Activated CD4-positive, alpha-beta T cell treated with anti-CD3 and anti-CD28 coated beads for 36 hours (primary cell): ENCODE measurements at regions of chr17 and their contacts with region 1.

Region 1: GRCh38 chr17:55601874-55602364 is 90.7 kb upstream of the SMIM36 start:
- DNase-seq: peak; percentile 37
- ATAC-seq: peak; percentile 58
- H3K4me3 Mint-ChIP-seq: no peak overlapping the region
- H3K27ac Mint-ChIP-seq: no peak overlapping the region
- H3K4me1 Mint-ChIP-seq: no peaks in the 10 kb centered on the region
- H3K27me3 Mint-ChIP-seq: peaks cover 16% of the 10 kb centered on the region

Region 2: GRCh38 chr17:55198690-55199370 is 403.1 kb before region 1 on chr17:
- CTCF ChIA-PET with region 1: no interaction called
- POLR2A ChIA-PET with region 1: no interaction called
- intact Hi-C with region 1: no loop called
- DNase-seq: no peak
- ATAC-seq: no peak
- H3K4me3 Mint-ChIP-seq: no peak overlapping the region
- H3K27ac Mint-ChIP-seq: no peak overlapping the region
- H3K4me1 Mint-ChIP-seq: no peaks in the 10 kb centered on the region
- H3K27me3 Mint-ChIP-seq: peaks cover 4% of the 10 kb centered on the region

Region 3: DNA sequence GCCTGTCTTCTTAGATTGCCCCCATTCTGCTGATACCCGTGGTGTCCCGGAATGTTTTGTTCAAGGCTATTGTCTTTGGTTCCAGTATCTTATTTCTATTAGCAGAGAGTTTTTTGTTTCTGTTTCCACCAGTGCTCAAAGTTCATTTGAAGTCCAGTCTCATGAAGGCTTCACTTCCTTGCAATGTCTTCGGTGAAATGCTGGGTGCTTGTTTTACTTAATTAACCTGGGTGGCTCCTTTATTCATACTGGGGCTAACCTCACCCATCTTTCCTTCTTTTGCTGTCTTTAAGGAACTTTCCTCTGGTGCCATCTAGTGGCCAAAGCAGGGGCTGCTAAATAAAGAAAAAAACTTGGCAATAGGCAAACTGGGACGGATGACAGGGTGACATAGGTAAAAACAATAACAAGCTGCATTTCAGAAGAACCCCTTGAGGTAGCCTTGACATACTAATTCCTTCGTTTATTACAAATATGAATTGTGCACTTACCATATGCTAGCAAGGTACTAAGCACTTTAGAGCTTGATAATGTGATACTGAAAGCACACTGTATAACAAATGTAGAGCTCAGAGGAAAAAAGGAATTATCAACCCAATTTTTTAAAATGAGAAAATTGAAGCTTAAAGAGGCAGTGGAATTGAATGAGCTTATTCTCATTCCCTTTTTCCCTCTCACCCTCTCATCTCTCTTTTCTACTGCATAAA is 87.9 kb before region 1 on chr17:
- CTCF ChIA-PET with region 1: interaction called, 11 read pairs
- POLR2A ChIA-PET with region 1: no interaction called
- intact Hi-C with region 1: no loop called
- DNase-seq: peak; percentile 77
- ATAC-seq: peak; percentile 66
- H3K4me3 Mint-ChIP-seq: no peak overlapping the region
- H3K27ac Mint-ChIP-seq: no peak overlapping the region
- H3K4me1 Mint-ChIP-seq: no peaks in the 10 kb centered on the region
- H3K27me3 Mint-ChIP-seq: peaks cover 2% of the 10 kb centered on the region

Region 4: DNA sequence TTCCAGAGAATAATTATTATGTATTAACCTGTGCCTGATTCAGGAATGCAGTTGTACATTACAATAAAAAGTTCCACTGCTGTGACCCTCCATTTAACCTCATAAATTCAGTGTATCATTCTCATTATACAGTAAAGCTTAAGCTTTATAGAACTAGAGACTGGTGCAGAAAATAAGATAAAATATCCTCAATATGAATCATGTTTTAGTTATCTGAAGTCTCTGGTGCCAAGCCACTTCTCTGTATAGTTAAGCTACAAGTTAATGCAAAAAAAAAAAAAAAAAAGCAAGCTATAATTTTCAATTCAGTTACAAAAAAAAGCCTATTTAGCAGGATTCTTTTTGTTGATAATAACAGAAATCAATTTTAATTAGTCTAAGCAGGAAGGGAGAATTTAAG is 68.3 kb before region 1 on chr17:
- CTCF ChIA-PET with region 1: interaction called, 158 read pairs
- POLR2A ChIA-PET with region 1: no interaction called
- intact Hi-C with region 1: no loop called
- DNase-seq: no peak
- ATAC-seq: no peak
- H3K4me3 Mint-ChIP-seq: no peak overlapping the region
- H3K27ac Mint-ChIP-seq: no peak overlapping the region
- H3K4me1 Mint-ChIP-seq: no peaks in the 10 kb centered on the region
- H3K27me3 Mint-ChIP-seq: peaks cover 14% of the 10 kb centered on the region

Region 5: DNA sequence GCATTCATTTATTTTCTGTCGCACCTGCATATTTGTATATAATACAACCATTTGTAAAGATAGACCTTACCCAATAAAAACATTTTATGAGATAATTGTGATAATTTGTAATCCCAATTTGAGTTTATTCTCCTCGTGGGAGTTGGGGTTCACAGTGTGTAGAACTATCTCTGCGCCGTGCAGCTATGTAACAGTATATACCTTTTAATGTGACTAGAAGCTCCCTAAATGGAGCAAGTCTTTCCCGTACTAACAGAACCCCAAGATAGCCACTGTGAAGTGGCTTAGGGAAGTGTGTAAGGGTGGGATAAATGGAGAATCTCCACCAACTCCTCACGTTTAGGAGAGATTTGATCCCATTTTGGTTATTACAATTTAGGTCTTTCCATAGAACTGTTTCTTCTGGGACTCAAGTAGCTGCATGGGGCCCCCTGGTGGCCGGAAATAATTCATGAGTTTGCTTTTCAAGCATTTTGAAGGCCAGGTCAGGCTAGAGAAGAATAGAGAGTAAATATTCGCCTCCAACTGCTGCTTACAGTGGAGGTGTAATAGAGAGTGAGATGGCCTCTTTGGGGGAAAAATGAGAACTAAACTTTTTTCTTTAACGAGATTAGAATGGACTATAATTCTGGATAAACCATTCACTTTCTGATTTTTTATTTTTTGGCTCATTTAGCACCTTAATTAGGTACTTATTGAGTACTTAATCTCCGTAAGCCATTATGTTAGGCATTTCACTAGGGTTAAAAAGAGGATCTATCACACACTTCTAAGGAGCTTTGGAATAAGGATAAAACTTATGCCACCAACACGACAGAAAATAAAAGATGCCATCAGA is 116.2 kb after region 1 on chr17:
- CTCF ChIA-PET with region 1: interaction called, 20 read pairs
- POLR2A ChIA-PET with region 1: no interaction called
- intact Hi-C with region 1: loop called in 1 of 2 experiments (anchors 5 kb)
- DNase-seq: peak; percentile 82
- ATAC-seq: no peak
- H3K4me3 Mint-ChIP-seq: no peak overlapping the region
- H3K27ac Mint-ChIP-seq: no peak overlapping the region
- H3K4me1 Mint-ChIP-seq: no peaks in the 10 kb centered on the region
- H3K27me3 Mint-ChIP-seq: peaks cover 24% of the 10 kb centered on the region

Region 6: GRCh38 chr17:55825213-55825612 is 223.3 kb after region 1 on chr17:
- CTCF ChIA-PET with region 1: interaction called, 4 read pairs
- POLR2A ChIA-PET with region 1: no interaction called
- intact Hi-C with region 1: loop called in 1 of 2 experiments (anchors 5 kb)
- DNase-seq: no peak
- ATAC-seq: no peak
- H3K4me3 Mint-ChIP-seq: no peak overlapping the region
- H3K27ac Mint-ChIP-seq: no peak overlapping the region
- H3K4me1 Mint-ChIP-seq: no peaks in the 10 kb centered on the region
- H3K27me3 Mint-ChIP-seq: no peaks in the 10 kb centered on the region

Region 7: GRCh38 chr17:55872374-55872773 is 270.5 kb after region 1 on chr17:
- CTCF ChIA-PET with region 1: no interaction called
- POLR2A ChIA-PET with region 1: no interaction called
- intact Hi-C with region 1: no loop called
- DNase-seq: no peak
- ATAC-seq: no peak
- H3K4me3 Mint-ChIP-seq: no peak overlapping the region
- H3K27ac Mint-ChIP-seq: no peak overlapping the region
- H3K4me1 Mint-ChIP-seq: no peaks in the 10 kb centered on the region
- H3K27me3 Mint-ChIP-seq: peaks cover 9% of the 10 kb centered on the region